B cell (primary cell): ENCODE measurements at regions of chr10 and their contacts with region 1.

Region 1: DNA sequence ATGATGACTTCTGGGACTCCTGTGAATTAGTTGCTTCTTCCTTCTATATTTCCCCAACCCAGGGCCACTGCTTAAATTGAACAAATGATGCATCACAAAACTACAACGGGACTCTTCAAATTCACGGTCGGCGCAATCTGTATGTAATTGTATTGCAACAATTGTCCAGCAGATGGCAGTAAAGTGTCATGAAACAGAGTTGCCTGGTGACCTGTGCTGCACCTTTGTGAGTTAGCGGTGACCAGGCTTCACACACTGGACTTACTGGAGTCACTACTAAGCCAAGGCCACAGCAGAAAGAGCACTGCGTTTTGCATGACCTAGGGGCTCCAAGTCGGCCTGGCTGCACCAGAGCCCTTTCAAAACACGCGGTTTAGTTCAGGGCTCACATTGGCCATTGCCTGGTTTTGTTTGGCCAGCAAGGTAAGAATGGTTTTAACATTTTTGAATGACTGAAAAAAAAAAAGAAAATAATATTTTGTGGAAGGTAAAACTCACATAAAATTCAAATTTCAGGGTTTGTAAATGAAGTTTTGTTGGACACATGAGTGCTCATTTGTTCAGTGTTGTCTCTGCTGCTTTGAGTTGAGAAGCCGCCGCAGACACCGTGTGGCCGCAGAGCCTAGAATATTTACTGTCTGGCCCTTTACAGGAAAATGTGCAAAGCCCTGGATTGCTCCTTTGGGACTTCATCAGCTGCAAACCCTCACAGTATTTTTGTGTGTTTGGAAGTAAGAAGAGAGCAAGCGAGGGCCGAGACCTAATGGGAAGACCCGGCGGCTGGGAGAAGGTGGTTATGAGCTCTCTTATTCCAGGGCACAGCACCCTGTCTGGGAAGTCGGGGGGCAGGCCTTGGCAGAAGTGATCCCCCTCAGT is 23.2 kb upstream of the ZNF32 start:
- DNase-seq: peak; percentile 72
- ATAC-seq: peak; percentile 66
- H3K4me3 ChIP-seq: no peak overlapping the region
- H3K4me3 Mint-ChIP-seq: no peak overlapping the region
- H3K27ac ChIP-seq: no peak overlapping the region
- H3K27ac Mint-ChIP-seq: no peak overlapping the region
- H3K4me1 ChIP-seq: peaks cover 0 to 5% of the 10 kb centered on the region in 2 donors
- H3K4me1 Mint-ChIP-seq: peaks cover 2% of the 10 kb centered on the region
- H3K27me3 ChIP-seq: peaks cover 0 to 42% (median 4%) of the 10 kb centered on the region in 4 experiments
- H3K27me3 Mint-ChIP-seq: peaks cover 44% of the 10 kb centered on the region
- CTCF ChIP-seq: peak; percentile 85

Region 2: DNA sequence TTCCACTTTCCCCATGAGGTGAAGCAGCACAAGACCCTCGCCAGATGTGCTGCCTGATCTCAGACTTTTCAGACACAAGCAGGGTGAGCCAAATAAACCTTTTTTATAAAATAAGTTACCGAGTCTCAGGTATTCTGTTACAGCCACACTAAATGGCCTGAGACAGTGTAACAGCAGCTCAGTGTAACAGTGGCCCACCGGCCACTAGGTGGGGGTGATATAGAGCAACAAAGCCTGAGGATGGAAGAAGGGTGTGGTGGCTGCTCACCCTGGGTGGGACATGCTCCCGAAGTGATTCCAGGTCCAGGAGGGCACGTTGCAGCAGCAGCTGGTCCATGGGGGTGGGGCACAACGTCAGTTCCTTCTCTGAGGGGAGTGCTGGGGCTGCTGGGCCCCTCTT is 844.7 kb before region 1 on chr10:
- CTCF ChIA-PET with region 1: no interaction called
- POLR2A ChIA-PET with region 1: no interaction called
- intact Hi-C with region 1: no loop called
- DNase-seq: no peak
- ATAC-seq: no peak
- H3K4me3 ChIP-seq: no peak overlapping the region
- H3K4me3 Mint-ChIP-seq: no peak overlapping the region
- H3K27ac ChIP-seq: no peak overlapping the region
- H3K27ac Mint-ChIP-seq: no peak overlapping the region
- H3K4me1 ChIP-seq: no peaks in the 10 kb centered on the region
- H3K4me1 Mint-ChIP-seq: no peaks in the 10 kb centered on the region
- H3K27me3 ChIP-seq: no peaks in the 10 kb centered on the region
- H3K27me3 Mint-ChIP-seq: no peaks in the 10 kb centered on the region
- CTCF ChIP-seq: no peak

Region 3: GRCh38 chr10:43453266-43453831 is 218.5 kb before region 1 on chr10:
- CTCF ChIA-PET with region 1: no interaction called
- POLR2A ChIA-PET with region 1: no interaction called
- intact Hi-C with region 1: no loop called
- DNase-seq: no peak
- ATAC-seq: no peak
- H3K4me3 ChIP-seq: no peak overlapping the region
- H3K4me3 Mint-ChIP-seq: peak overlapping the region; percentile 83
- H3K27ac ChIP-seq: peak overlapping the region; percentile 85 to 90
- H3K27ac Mint-ChIP-seq: peak overlapping the region; percentile 98
- H3K4me1 ChIP-seq: peaks cover 47 to 71% of the 10 kb centered on the region in 2 donors
- H3K4me1 Mint-ChIP-seq: peaks cover 48% of the 10 kb centered on the region
- H3K27me3 ChIP-seq: no peaks in the 10 kb centered on the region
- H3K27me3 Mint-ChIP-seq: no peaks in the 10 kb centered on the region
- CTCF ChIP-seq: no peak

Region 4: DNA sequence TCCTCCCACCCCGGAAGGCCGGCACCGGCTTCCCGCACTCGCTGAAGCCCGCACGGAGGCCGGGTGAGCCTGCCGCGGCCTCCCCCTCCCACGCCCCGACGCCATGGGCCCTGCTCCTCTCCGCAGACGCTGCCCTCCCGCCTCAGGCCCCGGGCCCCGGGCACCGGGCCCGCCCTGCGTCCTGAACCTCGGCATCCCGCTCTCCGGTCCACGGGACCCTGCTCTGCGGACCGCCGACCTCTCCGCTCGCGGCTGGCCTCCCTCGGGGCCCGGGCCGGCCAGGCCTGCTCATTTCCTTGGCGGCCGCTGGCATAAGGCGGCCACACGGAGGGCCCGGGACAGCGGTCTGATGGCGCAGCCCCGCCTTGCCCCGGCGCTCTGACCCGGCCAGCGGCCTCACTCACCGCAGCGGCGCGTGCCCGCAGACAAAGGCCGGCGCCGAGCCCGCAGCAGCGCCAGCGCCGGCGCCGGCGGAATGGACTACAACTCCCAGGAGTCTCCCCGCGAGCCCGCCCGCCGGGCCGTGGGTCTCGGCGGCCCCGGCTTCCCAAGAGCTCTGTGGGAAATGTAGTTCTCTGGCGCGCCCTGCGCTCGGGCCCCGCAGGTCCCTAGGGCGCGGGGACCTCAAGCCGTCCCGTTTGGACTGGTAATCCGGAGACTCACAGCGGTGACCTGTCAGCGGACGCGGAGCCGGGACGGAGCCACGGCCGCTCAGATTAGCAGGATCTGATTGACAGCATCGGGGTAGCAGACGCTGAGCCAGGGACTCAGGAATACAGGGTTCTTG is 23.3 kb before region 1 on chr10 and contains the start of gene ZNF32:
- CTCF ChIA-PET with region 1: no interaction called
- POLR2A ChIA-PET with region 1: no interaction called
- intact Hi-C with region 1: no loop called
- DNase-seq: peak; percentile 89
- ATAC-seq: peak; percentile 99
- H3K4me3 ChIP-seq: peak within 1 kb of the TSS; percentile 22 to 82 (median 63)
- H3K4me3 Mint-ChIP-seq: peak within 1 kb of the TSS; percentile 98
- H3K27ac ChIP-seq: peak within 1 kb of the TSS in 1 of 2 donors; percentile 86
- H3K27ac Mint-ChIP-seq: peak within 1 kb of the TSS; percentile 89
- H3K4me1 ChIP-seq: peaks cover 7 to 13% of the 10 kb centered on the region in 2 donors
- H3K4me1 Mint-ChIP-seq: peaks cover 16% of the 10 kb centered on the region
- H3K27me3 ChIP-seq: peaks cover 0 to 6% (median 0%) of the 10 kb centered on the region in 4 experiments
- H3K27me3 Mint-ChIP-seq: peaks cover 10% of the 10 kb centered on the region
- CTCF ChIP-seq: no peak
- total RNA-seq, gene ZNF32: 29.6 and 35.8 TPM in 2 replicates

Region 5: GRCh38 chr10:44386546-44387052 is 714.7 kb after region 1 on chr10:
- CTCF ChIA-PET with region 1: interaction called, 3 read pairs
- POLR2A ChIA-PET with region 1: no interaction called
- intact Hi-C with region 1: loop called (anchors 10 kb)
- DNase-seq: no peak
- ATAC-seq: no peak
- H3K4me3 ChIP-seq: no peak overlapping the region
- H3K4me3 Mint-ChIP-seq: no peak overlapping the region
- H3K27ac ChIP-seq: no peak overlapping the region
- H3K27ac Mint-ChIP-seq: no peak overlapping the region
- H3K4me1 ChIP-seq: no peaks in the 10 kb centered on the region
- H3K4me1 Mint-ChIP-seq: peaks cover 2% of the 10 kb centered on the region
- H3K27me3 ChIP-seq: peaks cover 0 to 28% (median 10%) of the 10 kb centered on the region in 4 experiments
- H3K27me3 Mint-ChIP-seq: peaks cover 31% of the 10 kb centered on the region
- CTCF ChIP-seq: no peak

Region 6: GRCh38 chr10:44857363-44858016 is 1185.6 kb after region 1 on chr10:
- CTCF ChIA-PET with region 1: interaction called, 25 read pairs
- POLR2A ChIA-PET with region 1: no interaction called
- intact Hi-C with region 1: loop called (anchors 2 kb)
- DNase-seq: peak; percentile 59
- ATAC-seq: peak; percentile 66
- H3K4me3 ChIP-seq: no peak overlapping the region
- H3K4me3 Mint-ChIP-seq: no peak overlapping the region
- H3K27ac ChIP-seq: no peak overlapping the region
- H3K27ac Mint-ChIP-seq: no peak overlapping the region
- H3K4me1 ChIP-seq: no peaks in the 10 kb centered on the region
- H3K4me1 Mint-ChIP-seq: no peaks in the 10 kb centered on the region
- H3K27me3 ChIP-seq: peaks cover 0 to 4% (median 0%) of the 10 kb centered on the region in 4 experiments
- H3K27me3 Mint-ChIP-seq: peaks cover 16% of the 10 kb centered on the region
- CTCF ChIP-seq: peak; percentile 94

Region 7: GRCh38 chr10:44864637-44865288 is 1192.9 kb after region 1 on chr10:
- CTCF ChIA-PET with region 1: interaction called, 25 read pairs
- POLR2A ChIA-PET with region 1: no interaction called
- intact Hi-C with region 1: loop called (anchors 1 kb)
- DNase-seq: peak; percentile 80
- ATAC-seq: peak; percentile 81
- H3K4me3 ChIP-seq: peak overlapping the region; percentile 12 to 68 (median 54)
- H3K4me3 Mint-ChIP-seq: peak overlapping the region; percentile 89
- H3K27ac ChIP-seq: no peak overlapping the region
- H3K27ac Mint-ChIP-seq: no peak overlapping the region
- H3K4me1 ChIP-seq: peaks cover 13 to 14% of the 10 kb centered on the region in 2 donors
- H3K4me1 Mint-ChIP-seq: peaks cover 15% of the 10 kb centered on the region
- H3K27me3 ChIP-seq: peaks cover 0 to 39% (median 10%) of the 10 kb centered on the region in 4 experiments
- H3K27me3 Mint-ChIP-seq: peaks cover 63% of the 10 kb centered on the region
- CTCF ChIP-seq: peak; percentile 97